Heart left ventricle (tissue), 16 donors: ENCODE measurements at regions of chr11 and their contacts with region 1.

Region 1: GRCh38 chr11:134033696-134034491 is 35.0 kb upstream of the JAM3 start:
- DNase-seq: peak; percentile 89 to 94 (median 90)
- ATAC-seq: peak; percentile 89 to 95 (median 92)
- H3K4me3 ChIP-seq: peak overlapping the region in 10 of 12 donors; percentile 19 to 52 (median 33)
- H3K27ac ChIP-seq: peak overlapping the region; percentile 76 to 98 (median 88)
- H3K4me1 ChIP-seq: peaks cover 3 to 61% (median 45%) of the 10 kb centered on the region in 12 donors
- H3K27me3 ChIP-seq: no peaks in the 10 kb centered on the region
- CTCF ChIP-seq: peak in 1 of 12 donors; percentile 4
- POLR2A ChIP-seq: no peak

Region 2: GRCh38 chr11:133947321-133947756 is 86.6 kb before region 1 on chr11:
- intact Hi-C with region 1: loop called in 5 of 10 experiments (anchors 5 to 10 kb)
- DNase-seq: peak; percentile 64 to 70 (median 67)
- ATAC-seq: peak; percentile 26 to 51 (median 43)
- H3K4me3 ChIP-seq: peak overlapping the region in 6 of 12 donors; percentile 11 to 42 (median 20)
- H3K27ac ChIP-seq: peak overlapping the region in 10 of 12 donors; percentile 27 to 98 (median 77)
- H3K4me1 ChIP-seq: peaks cover 14 to 86% (median 70%) of the 10 kb centered on the region in 12 donors
- H3K27me3 ChIP-seq: no peaks in the 10 kb centered on the region
- CTCF ChIP-seq: peak in 11 of 12 donors; percentile 23 to 64 (median 47)
- POLR2A ChIP-seq: no peak